CD4-positive, alpha-beta T cell (primary cell): ENCODE measurements at regions of chr12 and their contacts with region 1.

Region 1: GRCh38 chr12:6723607-6724396 is at the start of gene COPS7A:
- DNase-seq: peak; percentile 81 to 99 (median 93)
- ATAC-seq: peak; percentile 84
- H3K4me3 ChIP-seq: peak within 1 kb of the TSS; percentile 59
- H3K4me3 Mint-ChIP-seq: peak within 1 kb of the TSS; percentile 87
- H3K27ac ChIP-seq: peak within 1 kb of the TSS; percentile 68 to 88
- H3K27ac Mint-ChIP-seq: peak within 1 kb of the TSS; percentile 83
- H3K4me1 ChIP-seq: peaks cover 18% of the 10 kb centered on the region
- H3K4me1 Mint-ChIP-seq: peaks cover 28% of the 10 kb centered on the region
- H3K27me3 ChIP-seq: no peaks in the 10 kb centered on the region
- H3K27me3 Mint-ChIP-seq: no peaks in the 10 kb centered on the region
- CTCF ChIP-seq: no peak
- total RNA-seq, gene COPS7A: 9.4 to 9.6 TPM

Region 2: GRCh38 chr12:6632026-6632983 is 91.5 kb before region 1 on chr12:
- CTCF ChIA-PET with region 1: no interaction called
- POLR2A ChIA-PET with region 1: interaction called, 10 read pairs
- intact Hi-C with region 1: no loop called
- DNase-seq: peak in 13 of 14 experiments; percentile 29 to 84 (median 47)
- ATAC-seq: peak; percentile 81
- H3K4me3 ChIP-seq: peak overlapping the region; percentile 51
- H3K4me3 Mint-ChIP-seq: peak overlapping the region; percentile 78
- H3K27ac ChIP-seq: peak overlapping the region; percentile 66 to 67
- H3K27ac Mint-ChIP-seq: peak overlapping the region; percentile 91
- H3K4me1 ChIP-seq: peaks cover 70% of the 10 kb centered on the region
- H3K4me1 Mint-ChIP-seq: peaks cover 63% of the 10 kb centered on the region
- H3K27me3 ChIP-seq: no peaks in the 10 kb centered on the region
- H3K27me3 Mint-ChIP-seq: no peaks in the 10 kb centered on the region
- CTCF ChIP-seq: no peak

Region 3: DNA sequence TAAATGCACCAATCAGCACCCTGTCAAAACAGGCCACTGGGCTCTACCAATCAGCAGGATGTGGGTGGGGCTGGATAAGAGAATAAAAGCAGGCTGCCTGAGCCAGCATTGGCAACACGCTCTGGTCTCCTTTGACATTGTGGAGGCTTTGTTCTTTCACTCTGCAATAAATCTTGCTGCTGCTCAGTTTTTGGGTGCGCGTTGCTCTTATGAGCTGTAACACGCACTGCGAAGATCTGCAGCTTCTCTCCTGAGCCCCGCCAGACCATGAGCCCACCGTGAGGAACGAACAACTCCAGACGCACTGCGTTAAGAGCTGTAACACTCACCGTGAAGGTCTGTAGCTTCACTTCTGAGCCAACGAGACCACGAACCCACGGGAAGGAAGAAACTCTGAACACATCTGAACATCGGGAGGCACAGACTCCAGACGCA is 14.8 kb before region 1 on chr12:
- CTCF ChIA-PET with region 1: no interaction called
- POLR2A ChIA-PET with region 1: interaction called, 21 read pairs
- intact Hi-C with region 1: no loop called
- DNase-seq: peak in 4 of 14 experiments; percentile 16 to 67 (median 39)
- ATAC-seq: peak; percentile 84
- H3K4me3 ChIP-seq: peak overlapping the region; percentile 36
- H3K4me3 Mint-ChIP-seq: peak overlapping the region; percentile 87
- H3K27ac ChIP-seq: peak overlapping the region in 1 of 2 donors; percentile 52
- H3K27ac Mint-ChIP-seq: peak overlapping the region; percentile 79
- H3K4me1 ChIP-seq: peaks cover 11% of the 10 kb centered on the region
- H3K4me1 Mint-ChIP-seq: peaks cover 9% of the 10 kb centered on the region
- H3K27me3 ChIP-seq: peaks cover 5 to 7% of the 10 kb centered on the region in 2 experiments
- H3K27me3 Mint-ChIP-seq: peaks cover 25% of the 10 kb centered on the region
- CTCF ChIP-seq: no peak

Region 4: GRCh38 chr12:6735448-6736191 is 11.8 kb after region 1 on chr12:
- CTCF ChIA-PET with region 1: no interaction called
- POLR2A ChIA-PET with region 1: interaction called, 5 read pairs
- intact Hi-C with region 1: loop called in 1 of 2 experiments (anchors 1 kb)
- DNase-seq: peak in 13 of 14 experiments; percentile 9 to 64 (median 37)
- ATAC-seq: peak; percentile 67
- H3K4me3 ChIP-seq: no peak overlapping the region
- H3K4me3 Mint-ChIP-seq: no peak overlapping the region
- H3K27ac ChIP-seq: no peak overlapping the region
- H3K27ac Mint-ChIP-seq: no peak overlapping the region
- H3K4me1 ChIP-seq: no peaks in the 10 kb centered on the region
- H3K4me1 Mint-ChIP-seq: peaks cover 4% of the 10 kb centered on the region
- H3K27me3 ChIP-seq: no peaks in the 10 kb centered on the region
- H3K27me3 Mint-ChIP-seq: no peaks in the 10 kb centered on the region
- CTCF ChIP-seq: peak; percentile 58